HEK293 (cell line): ENCODE measurements at regions of chr11 and their contacts with region 1.

Region 1: GRCh38 chr11:67288452-67289225 is 464 bp upstream of the ANKRD13D start:
- H3K4me3 ChIP-seq: peak overlapping the region; percentile 81
- H3K27ac ChIP-seq: peak overlapping the region; percentile 93
- H3K4me1 ChIP-seq: no peaks in the 10 kb centered on the region
- CTCF ChIP-seq: no peak; the same call in 1 of the 2 replicates

Region 2: DNA sequence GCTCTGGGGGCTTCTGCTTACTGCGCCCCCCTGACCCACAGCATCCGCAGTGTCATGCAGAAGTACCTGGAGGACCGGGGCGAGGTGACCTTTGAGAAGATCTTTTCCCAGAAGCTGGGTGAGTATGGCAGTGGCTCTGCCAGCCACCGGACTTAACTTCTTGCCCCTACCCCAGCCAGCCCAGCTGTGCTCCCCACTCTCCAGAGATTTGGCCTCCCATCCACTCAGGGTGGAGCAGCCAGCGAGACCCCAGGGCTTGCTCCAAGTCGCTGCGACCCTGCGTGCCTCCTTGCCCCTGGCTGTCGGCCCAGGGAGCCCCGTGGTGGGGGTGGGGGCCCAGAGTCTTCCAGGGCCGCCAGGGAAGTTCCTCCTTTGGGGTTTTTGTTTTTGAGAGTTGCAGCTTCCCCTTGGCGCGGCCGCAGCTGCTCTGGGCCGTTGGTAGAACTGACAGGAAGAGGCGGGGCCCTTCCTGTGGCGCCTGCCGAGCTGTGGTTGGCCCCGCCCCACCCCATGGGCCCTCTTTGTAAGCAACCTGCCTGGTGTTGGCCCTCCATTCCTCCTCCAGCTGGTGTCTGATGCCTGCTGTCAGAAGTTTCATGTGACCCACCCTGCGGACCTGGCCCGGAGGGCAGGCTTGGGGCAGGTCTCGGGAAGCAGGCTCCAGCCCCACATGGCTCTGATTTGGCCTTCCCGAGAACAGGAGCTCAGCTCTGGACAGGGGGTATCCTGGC is 11.2 kb before region 1 on chr11:
- CTCF ChIA-PET with region 1: interaction called, 4 read pairs
- POLR2A ChIA-PET with region 1: interaction called, 11 read pairs
- H3K4me3 ChIP-seq: no peak overlapping the region
- H3K27ac ChIP-seq: peak overlapping the region; percentile 93
- H3K4me1 ChIP-seq: peaks cover 4% of the 10 kb centered on the region
- CTCF ChIP-seq: no peak; the same call in 1 of the 2 replicates

Region 3: DNA sequence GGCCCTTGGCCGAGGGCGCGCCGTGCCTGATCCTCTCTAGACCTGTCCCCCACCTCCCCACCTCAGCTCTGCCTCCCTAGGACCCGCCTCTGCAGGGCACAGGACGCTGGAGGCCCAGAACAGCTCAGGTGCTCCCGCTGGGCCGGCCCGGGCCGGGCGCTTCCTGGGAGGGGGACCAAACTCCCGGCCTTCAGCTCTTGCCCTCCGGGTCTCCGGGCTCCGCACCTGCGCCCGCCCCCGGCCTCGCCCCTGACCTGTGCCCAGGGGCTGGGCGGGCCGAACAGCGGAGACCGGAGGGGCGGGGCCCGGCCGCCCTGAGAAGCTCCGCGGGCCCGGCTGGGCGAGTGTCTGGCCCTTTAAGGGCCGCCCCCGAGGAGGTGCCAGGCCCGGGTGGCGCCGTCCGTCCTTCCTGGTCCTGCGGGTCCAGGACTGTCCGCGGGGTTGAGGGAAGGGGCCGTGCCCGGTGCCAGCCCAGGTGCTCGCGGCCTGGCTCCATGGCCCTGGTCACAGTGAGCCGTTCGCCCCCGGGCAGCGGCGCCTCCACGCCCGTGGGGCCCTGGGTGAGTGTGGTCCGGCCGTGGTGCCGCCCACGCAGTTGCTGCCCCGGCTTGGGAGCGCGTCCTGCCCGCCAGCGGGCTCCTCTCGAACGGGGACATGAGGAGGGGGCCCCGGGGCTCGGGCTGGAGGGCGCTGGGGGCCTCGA is 14.6 kb after region 1 on chr11 and contains the start of gene SSH3:
- CTCF ChIA-PET with region 1: no interaction called
- POLR2A ChIA-PET with region 1: interaction called, 17 read pairs
- H3K4me3 ChIP-seq: peak within 1 kb of the TSS; percentile 66
- H3K27ac ChIP-seq: peak within 1 kb of the TSS; percentile 79; the same call in 1 of the 2 replicates
- H3K4me1 ChIP-seq: no peaks in the 10 kb centered on the region
- CTCF ChIP-seq: no peak

Region 4: DNA sequence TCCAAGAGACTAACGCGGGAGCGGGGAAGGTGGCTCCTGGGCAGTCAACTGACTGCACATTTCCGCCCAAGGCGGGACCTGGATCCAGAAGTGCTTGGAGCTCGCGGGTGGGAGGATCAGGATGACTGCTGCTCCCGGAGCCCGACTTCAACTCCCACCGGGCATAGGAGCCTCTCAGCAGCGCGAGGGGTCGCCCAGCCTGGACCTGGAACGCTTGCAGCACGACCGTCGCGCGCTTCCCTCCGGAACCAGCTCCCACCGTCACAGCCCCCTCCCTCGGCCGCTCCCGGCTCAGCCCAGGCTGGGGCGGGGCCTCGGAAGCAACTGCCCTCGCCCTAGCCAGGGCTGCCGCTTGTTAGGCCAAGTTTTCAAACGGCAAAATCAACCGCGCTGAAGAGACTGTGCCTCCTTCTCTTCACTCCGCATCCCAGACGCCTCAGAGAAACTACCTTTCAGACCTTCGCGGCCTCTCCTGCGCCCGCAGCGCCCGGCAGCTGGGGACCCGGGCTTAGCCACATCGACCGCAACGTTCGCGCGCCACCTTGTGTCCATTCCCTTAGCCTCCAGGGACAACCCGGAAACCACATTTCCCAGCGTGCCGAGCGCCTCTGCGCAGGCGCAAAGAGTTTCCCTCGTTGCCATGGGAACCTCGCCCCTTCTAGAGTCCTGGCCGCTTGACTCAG is 28.7 kb after region 1 on chr11:
- CTCF ChIA-PET with region 1: interaction called, 6 read pairs
- POLR2A ChIA-PET with region 1: interaction called, 26 read pairs
- H3K4me3 ChIP-seq: peak overlapping the region; percentile 75
- H3K27ac ChIP-seq: peak overlapping the region; percentile 79
- H3K4me1 ChIP-seq: no peaks in the 10 kb centered on the region
- CTCF ChIP-seq: peak; percentile 98

Region 5: GRCh38 chr11:67337257-67337656 is 48.6 kb after region 1 on chr11:
- CTCF ChIA-PET with region 1: no interaction called
- POLR2A ChIA-PET with region 1: no interaction called
- H3K4me3 ChIP-seq: no peak overlapping the region
- H3K27ac ChIP-seq: no peak overlapping the region
- H3K4me1 ChIP-seq: no peaks in the 10 kb centered on the region
- CTCF ChIP-seq: no peak